ENCODE measurements at regions of chr21 and their contacts with region 1.

Region 1: DNA sequence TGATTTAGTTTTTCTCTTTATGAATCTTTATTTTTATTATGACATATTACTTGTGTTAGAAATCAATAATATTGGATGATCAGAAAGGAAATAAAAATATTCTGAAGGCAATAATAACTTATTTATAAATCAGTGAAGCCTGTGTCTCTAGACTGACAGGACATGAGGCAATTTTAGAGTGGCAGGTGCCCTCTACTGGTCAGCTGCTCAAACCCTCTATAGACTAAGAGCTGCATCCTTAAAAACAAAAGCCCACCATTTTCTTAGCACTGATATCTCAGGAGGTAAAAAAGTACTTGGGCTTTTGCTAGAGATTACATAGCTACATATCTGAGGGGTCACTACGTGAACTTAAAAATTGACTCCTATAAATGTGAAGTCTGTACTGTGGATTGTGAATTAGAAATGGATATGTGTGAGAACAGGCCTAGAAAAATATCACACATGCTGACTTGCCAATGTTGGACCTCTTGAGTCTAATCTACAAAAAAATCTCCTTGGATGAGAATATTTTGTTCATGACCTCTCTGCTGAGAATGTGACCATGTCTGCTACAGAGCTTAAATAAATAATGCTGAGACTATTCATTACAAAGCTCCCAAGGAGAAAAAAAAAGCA is 597.9 kb upstream of the ADAMTS5 start:
- DNase-seq: peak in 4 of 5 donors; percentile 30 to 40 (median 38)
- ATAC-seq: peak in 3 of 4 donors; percentile 71 to 76 (median 76)
- H3K4me3 ChIP-seq: no peak overlapping the region
- H3K27ac ChIP-seq: no peak overlapping the region
- H3K4me1 ChIP-seq: peaks cover 0 to 3% (median 0%) of the 10 kb centered on the region in 12 donors
- H3K27me3 ChIP-seq: no peaks in the 10 kb centered on the region
- CTCF ChIP-seq: peak; percentile 58 to 92 (median 76)
- POLR2A ChIP-seq: no peak

Region 2: GRCh38 chr21:26850108-26850643 is 714.6 kb before region 1 on chr21:
- intact Hi-C with region 1: loop called (anchors 2 to 5 kb)
- DNase-seq: no peak
- ATAC-seq: no peak
- H3K4me3 ChIP-seq: peak overlapping the region in 6 of 12 donors; percentile 3 to 40 (median 8)
- H3K27ac ChIP-seq: no peak overlapping the region
- H3K4me1 ChIP-seq: peaks cover 0 to 19% (median 5%) of the 10 kb centered on the region in 12 donors
- H3K27me3 ChIP-seq: peaks cover 0 to 14% (median 0%) of the 10 kb centered on the region in 9 donors
- CTCF ChIP-seq: peak; percentile 44 to 86 (median 72)
- POLR2A ChIP-seq: no peak

Region 3: GRCh38 chr21:26881504-26882228 is 683.1 kb before region 1 on chr21:
- intact Hi-C with region 1: loop called in 4 of 10 experiments (anchors 10 kb)
- DNase-seq: no peak
- ATAC-seq: no peak
- H3K4me3 ChIP-seq: no peak overlapping the region
- H3K27ac ChIP-seq: no peak overlapping the region
- H3K4me1 ChIP-seq: peaks cover 0 to 5% (median 0%) of the 10 kb centered on the region in 12 donors
- H3K27me3 ChIP-seq: no peaks in the 10 kb centered on the region
- CTCF ChIP-seq: peak in 11 of 12 donors; percentile 16 to 57 (median 38)
- POLR2A ChIP-seq: no peak

Region 4: GRCh38 chr21:26967062-26967913 is 597.5 kb before region 1 on chr21 and contains the start of gene ADAMTS5:
- intact Hi-C with region 1: loop called in 3 of 10 experiments (anchors 5 to 10 kb)
- DNase-seq: peak; percentile 45 to 72 (median 61)
- ATAC-seq: peak; percentile 28 to 68 (median 59)
- H3K4me3 ChIP-seq: peak within 1 kb of the TSS; percentile 35 to 74 (median 64)
- H3K27ac ChIP-seq: peak within 1 kb of the TSS; percentile 0 to 82 (median 69)
- H3K4me1 ChIP-seq: peaks cover 0 to 26% (median 11%) of the 10 kb centered on the region in 12 donors
- H3K27me3 ChIP-seq: peaks cover 0 to 50% (median 7%) of the 10 kb centered on the region in 9 donors
- CTCF ChIP-seq: no peak
- POLR2A ChIP-seq: peak in 1 of 2 donors; percentile 36
- total RNA-seq, gene ADAMTS5: 0.98 to 22.7 (median 3.6) TPM

Region 5: GRCh38 chr21:27362249-27362648 is 202.5 kb before region 1 on chr21:
- intact Hi-C with region 1: loop called in 9 of 10 experiments (anchors 2 to 10 kb)
- DNase-seq: no peak
- ATAC-seq: no peak
- H3K4me3 ChIP-seq: no peak overlapping the region
- H3K27ac ChIP-seq: no peak overlapping the region
- H3K4me1 ChIP-seq: no peaks in the 10 kb centered on the region
- H3K27me3 ChIP-seq: no peaks in the 10 kb centered on the region
- CTCF ChIP-seq: peak in 10 of 12 donors; percentile 6 to 51 (median 35)
- POLR2A ChIP-seq: no peak

Region 6: DNA sequence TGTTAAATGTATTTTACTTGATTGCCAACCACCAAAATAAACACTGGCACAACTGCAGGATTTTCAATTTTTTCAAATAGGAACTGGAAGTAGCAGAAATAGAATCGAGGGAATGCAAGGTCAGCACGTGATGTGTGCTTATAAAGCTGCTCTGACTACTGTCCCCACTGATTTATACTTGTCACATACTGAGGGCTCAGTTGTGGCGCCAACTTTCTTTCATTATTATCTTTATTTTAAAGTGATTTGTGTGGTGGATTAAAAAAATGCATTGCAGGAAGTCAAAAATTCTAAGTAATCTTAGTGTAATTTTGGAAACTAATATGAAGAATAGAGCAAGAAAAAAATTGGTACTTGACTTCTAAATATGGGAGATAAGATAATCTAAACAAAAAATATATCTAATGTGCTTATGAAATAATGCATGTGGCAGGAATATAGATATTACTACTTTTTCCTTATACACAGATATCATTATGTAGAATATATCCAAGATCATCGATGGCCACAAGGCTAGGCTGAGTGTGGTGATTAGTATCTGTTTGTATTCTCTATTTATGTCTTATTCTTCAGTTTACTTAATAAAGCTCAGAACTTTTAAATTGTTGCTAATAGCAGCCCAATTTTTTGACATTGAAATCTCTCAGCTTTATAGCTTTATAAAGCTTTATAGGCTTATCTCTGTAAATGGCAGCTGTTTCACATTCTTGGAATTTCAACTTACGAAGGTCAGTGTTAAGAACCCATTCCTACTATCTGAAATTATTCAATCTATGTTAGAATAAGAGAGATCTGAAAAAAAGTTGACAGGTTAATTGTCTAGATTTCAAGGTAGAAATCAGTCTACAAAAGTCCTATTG is 193.4 kb before region 1 on chr21:
- intact Hi-C with region 1: loop called in 6 of 10 experiments (anchors 5 to 10 kb)
- DNase-seq: no peak
- ATAC-seq: peak in 2 of 4 donors; percentile 44 to 60
- H3K4me3 ChIP-seq: no peak overlapping the region
- H3K27ac ChIP-seq: peak overlapping the region in 6 of 12 donors; percentile 0 to 45 (median 18)
- H3K4me1 ChIP-seq: peaks cover 0 to 36% (median 25%) of the 10 kb centered on the region in 12 donors
- H3K27me3 ChIP-seq: no peaks in the 10 kb centered on the region
- CTCF ChIP-seq: no peak
- POLR2A ChIP-seq: no peak

Measured in heart left ventricle (tissue), 16 donors.